AG04450 (cell line): ENCODE measurements at regions of chr10 and their contacts with region 1.

Region 1: DNA sequence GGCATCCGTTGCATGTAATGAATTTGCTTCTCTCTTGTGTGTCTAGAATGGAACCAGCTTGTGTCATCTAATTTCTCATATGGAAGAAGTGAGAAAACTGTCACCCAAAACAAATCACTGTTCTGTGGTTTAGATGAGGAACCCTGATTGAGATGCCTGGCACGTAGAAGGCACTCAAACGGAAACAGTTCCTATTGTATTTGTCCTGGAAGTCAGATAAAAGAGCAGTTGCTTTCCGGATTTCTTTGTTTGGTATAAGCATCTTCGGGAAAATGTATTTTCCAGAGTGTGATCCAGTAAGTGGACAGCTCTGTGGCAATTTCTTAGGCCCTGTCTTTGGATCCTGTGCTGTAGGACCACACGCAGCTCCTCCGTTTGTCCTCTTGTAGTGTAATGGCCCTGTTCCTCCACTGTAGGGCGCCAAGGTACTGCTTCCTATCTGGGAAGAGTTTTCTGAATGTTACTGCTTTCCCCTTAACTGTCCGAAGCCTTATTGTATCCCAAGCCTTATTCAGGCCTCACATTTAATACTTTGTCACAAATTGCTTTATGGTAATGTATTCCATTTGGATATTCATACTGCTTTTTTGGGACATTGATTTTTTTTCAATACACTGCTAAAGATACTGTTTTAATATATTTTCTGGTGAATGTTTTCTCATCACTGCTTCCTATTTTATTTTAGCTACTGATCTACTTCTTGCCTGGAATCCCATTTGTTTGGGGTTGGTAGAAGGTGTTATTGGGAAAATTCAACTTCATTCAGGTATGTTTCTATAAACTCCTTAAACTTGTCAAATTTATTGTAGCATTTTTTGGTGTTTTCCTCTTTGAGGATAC is 24.8 kb downstream of the INPP5F start:
- DNase-seq: peak; percentile 65
- H3K4me3 ChIP-seq: no peak overlapping the region
- H3K27ac ChIP-seq: no peak overlapping the region
- H3K27me3 ChIP-seq: no peaks in the 10 kb centered on the region
- CTCF ChIP-seq: peak; percentile 99

Region 2: DNA sequence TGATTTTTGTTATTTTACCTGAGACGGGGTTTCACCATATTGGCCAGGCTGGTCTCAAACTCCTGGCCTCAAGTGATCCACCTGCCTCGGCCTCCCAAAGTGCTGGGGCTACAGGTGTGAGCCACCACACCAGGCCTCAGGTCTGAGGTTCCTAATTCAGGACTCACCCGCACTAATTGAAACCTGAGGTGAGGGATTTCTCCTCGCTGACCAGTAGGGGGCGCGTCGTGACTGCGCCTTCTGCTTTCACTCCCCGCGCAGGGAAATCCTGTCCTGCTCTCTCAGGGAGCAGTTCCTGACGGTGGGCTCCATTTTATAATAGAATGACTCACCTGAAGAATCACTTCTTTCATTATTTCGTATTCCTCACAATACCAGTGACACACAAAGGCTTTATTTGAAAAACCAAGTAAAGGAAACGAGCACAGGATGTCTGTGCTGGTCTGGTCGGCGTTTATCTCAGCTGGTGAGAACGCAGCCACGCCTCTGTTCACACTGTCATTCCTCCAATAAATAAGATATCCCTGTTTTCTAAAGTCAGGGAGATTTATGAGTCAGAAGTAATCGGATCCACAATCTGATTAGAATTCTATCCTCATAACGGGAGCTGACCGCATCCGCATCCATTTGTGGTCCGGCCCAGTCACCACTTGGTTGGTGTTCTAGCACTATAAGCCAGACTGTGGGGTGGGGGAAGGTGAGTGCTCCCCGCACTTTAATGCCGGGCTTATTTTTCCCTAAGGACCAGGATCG is 64.0 kb before region 1 on chr10:
- CTCF ChIA-PET with region 1: interaction called, 11 read pairs
- POLR2A ChIA-PET with region 1: no interaction called
- DNase-seq: peak; percentile 69
- H3K4me3 ChIP-seq: peak overlapping the region; percentile 54
- H3K27ac ChIP-seq: peak overlapping the region; percentile 81
- H3K27me3 ChIP-seq: no peaks in the 10 kb centered on the region
- CTCF ChIP-seq: peak; percentile 86

Region 3: DNA sequence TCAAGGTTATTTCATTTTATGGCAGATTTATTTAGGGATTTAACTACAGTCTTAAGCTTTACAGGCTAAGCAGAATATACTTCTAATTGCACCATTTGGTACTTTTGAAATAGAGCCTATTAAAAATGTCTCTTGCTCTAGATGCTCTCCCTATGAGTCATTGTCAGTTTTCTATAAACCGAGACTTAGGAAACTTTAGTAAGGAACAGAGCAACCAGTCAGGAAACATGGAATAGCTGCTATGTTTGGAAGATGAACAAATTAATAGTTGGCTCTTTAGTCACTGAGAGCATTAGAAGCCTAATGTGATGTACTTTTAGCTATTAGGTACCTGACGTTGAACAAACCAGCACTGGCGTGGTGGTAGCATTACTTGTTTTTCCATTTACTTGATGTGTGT is 10.5 kb after region 1 on chr10:
- CTCF ChIA-PET with region 1: interaction called, 47 read pairs
- POLR2A ChIA-PET with region 1: no interaction called
- DNase-seq: peak; percentile 61
- H3K4me3 ChIP-seq: no peak overlapping the region
- H3K27ac ChIP-seq: no peak overlapping the region
- H3K27me3 ChIP-seq: no peaks in the 10 kb centered on the region
- CTCF ChIP-seq: no peak

Region 4: DNA sequence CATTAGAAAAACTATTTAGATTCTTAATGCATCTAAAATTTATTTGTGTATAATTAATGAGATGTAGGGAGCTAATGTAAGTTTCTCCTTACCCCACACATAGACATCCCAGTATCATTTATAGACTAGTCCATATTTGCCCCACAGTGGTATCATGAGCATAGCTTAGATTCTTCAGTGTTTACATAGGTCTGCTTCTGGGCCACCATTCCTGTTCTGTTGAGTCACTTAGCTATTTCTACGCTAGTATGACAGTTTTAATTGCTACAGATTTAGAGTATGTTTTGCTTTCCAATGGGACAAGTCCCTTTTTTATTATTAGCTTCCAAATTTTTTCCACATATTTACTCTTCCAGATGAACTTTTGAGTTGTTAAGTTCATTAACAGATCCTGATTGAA is 52.7 kb after region 1 on chr10:
- CTCF ChIA-PET with region 1: interaction called, 10 read pairs
- POLR2A ChIA-PET with region 1: no interaction called
- DNase-seq: no peak
- H3K4me3 ChIP-seq: no peak overlapping the region
- H3K27ac ChIP-seq: no peak overlapping the region
- H3K27me3 ChIP-seq: no peaks in the 10 kb centered on the region
- CTCF ChIP-seq: no peak

Region 5: DNA sequence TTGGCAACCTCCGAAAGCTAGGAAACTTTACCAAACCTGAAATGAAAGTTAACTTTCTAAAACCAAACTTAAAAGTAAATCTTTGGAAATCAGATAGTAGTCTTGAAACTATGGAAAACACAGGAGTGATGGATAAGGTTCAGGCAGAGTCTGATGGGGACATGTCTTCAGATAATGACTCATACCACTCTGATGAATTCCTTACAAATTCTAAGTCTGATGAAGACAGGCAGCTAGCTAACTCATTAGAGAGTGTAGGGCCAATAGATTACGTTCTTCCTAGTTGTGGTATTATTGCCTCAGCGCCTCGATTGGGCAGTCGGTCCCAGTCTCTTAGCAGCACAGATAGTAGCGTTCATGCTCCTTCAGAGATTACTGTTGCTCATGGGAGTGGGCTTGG is 76.2 kb after region 1 on chr10:
- CTCF ChIA-PET with region 1: interaction called, 10 read pairs
- POLR2A ChIA-PET with region 1: no interaction called
- DNase-seq: no peak
- H3K4me3 ChIP-seq: no peak overlapping the region
- H3K27ac ChIP-seq: no peak overlapping the region
- H3K27me3 ChIP-seq: no peaks in the 10 kb centered on the region
- CTCF ChIP-seq: no peak